ENCODE measurements at regions of chr2 and their contacts with region 1.

Region 1: GRCh38 chr2:165219481-165219880 is 15.6 kb upstream of the SCN3A start:
- DNase-seq: no peak
- ATAC-seq: no peak
- H3K4me3 ChIP-seq: no peak overlapping the region
- H3K27ac ChIP-seq: no peak overlapping the region
- H3K4me1 ChIP-seq: no peaks in the 10 kb centered on the region
- CTCF ChIP-seq: no peak
- EP300 ChIP-seq: no peak
- POLR2A ChIP-seq: no peak
- RAD21 ChIP-seq: no peak

Region 2: DNA sequence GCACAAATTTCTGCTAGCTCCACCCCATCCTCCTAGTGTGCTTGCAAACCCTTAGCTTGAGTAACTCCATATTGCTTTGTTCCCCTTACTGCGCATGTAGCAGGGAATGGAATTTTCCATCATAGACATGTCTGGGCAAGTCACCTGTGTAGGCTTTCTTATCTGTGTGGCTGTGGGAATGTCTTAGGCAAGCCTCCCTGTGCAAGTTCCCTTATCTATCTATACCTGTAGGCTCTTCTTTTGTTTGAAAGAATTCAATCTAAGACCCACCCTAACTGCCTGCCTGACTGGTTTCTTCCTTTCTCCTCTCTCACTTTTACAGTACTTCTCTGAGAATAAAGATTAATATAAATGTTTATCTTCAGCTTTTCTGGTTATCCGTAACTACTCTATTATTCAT is 1266.0 kb before region 1 on chr2:
- CTCF ChIA-PET with region 1: no interaction called
- POLR2A ChIA-PET with region 1: no interaction called
- DNase-seq: peak in 1 of 2 experiments; percentile 6
- ATAC-seq: no peak
- H3K4me3 ChIP-seq: no peak overlapping the region
- H3K27ac ChIP-seq: no peak overlapping the region
- H3K4me1 ChIP-seq: no peaks in the 10 kb centered on the region
- CTCF ChIP-seq: no peak
- EP300 ChIP-seq: no peak
- POLR2A ChIP-seq: no peak
- RAD21 ChIP-seq: no peak

Region 3: DNA sequence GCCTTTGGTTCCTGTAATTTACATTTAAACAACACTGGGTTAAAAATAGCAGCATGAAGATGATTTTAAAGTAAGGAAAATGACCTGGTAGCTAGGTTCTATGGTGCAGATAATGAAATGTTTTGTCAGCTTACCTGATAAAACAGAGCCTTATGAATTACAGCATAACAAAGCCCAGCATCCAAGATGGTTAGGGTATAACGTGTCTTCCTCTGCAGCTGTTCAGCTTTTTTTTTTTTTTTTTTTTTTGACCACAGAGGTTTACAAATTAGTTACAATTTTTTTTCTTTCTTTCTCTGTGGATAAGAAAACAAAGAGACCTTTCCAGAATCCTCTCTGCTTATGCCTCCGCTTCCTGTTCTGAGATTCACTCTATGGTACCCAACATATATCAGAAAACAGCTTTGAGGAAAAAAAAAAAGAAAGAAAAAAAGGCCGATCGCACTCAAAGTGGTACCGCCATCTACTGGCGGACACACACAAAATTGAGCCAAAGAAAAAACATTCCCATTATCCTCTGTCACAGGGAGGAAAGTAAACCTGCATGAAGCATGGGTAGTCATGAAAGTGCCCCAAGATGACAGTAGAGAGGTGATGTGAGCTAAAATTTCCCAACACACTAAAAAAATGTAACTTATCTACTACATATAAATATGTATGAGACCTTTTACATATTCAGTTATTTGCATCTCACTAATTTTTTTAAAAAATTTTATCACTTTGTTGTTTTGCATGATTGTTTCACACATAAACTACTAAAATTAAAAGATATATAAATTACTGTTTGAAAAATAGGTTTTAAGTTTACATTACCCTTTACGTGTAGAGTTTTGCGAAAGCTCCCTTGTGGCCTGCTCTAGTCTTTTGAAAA is 15.6 kb before region 1 on chr2 and contains the start of gene SCN3A:
- CTCF ChIA-PET with region 1: interaction called, 16 read pairs
- POLR2A ChIA-PET with region 1: no interaction called
- DNase-seq: peak; percentile 4 to 51
- ATAC-seq: peak; percentile 73 to 82; a peak in 4 of 6 replicates
- H3K4me3 ChIP-seq: no peak within 1 kb of the TSS
- H3K27ac ChIP-seq: no peak within 1 kb of the TSS
- H3K4me1 ChIP-seq: no peaks in the 10 kb centered on the region
- CTCF ChIP-seq: peak; percentile 87
- EP300 ChIP-seq: no peak
- POLR2A ChIP-seq: no peak
- RAD21 ChIP-seq: peak; percentile 67 to 70
- polyA plus RNA-seq, gene SCN3A: 0.07 and 0.12 TPM in 2 replicates